ENCODE measurements at regions of chr2 and their contacts with region 1.

Region 1: GRCh38 chr2:151437630-151438029 is 27.9 kb downstream of the RIF1 start:
- DNase-seq: peak; percentile 4
- H3K4me3 ChIP-seq: no peak overlapping the region
- H3K27ac ChIP-seq: no peak overlapping the region
- H3K4me1 ChIP-seq: no peaks in the 10 kb centered on the region
- H3K27me3 ChIP-seq: no peaks in the 10 kb centered on the region
- CTCF ChIP-seq: peak; percentile 32 to 47

Region 2: DNA sequence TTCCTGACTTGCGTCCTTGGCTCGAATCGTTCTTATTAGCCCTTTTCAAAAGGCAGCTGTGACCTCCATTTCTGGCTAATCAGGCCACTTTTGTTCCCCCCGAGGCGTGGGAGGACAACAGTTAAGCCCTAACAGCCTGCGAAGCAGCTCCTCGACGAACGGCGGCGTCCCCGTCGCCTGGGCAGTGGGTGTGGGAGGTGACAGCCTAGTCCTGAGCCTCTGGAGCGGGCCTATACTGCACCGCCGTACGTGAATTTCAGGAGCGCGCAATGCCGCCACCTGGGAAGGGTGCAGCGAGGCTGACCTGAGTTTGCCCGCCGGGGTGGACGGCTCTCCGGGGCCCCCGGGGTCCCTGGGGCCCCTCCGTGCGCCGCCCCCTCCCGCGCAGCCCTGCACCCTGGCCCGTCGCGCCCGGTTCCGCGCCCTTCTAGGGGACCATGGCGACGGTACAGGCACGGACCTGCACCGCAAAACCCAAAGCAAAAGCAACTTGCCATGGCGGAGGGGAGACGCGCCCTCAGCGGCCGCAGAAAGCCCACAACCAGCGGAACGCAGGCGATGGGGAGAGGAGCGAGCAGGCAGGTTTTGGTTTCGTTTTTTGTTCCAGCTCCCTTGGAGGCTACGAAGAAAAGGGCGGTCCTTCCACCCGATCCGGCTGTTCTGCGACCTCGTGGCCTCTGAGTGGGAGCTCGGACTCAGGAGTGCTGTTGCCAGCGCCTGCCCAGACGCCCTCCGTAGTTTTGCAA is 176.2 kb before region 1 on chr2 and contains the start of gene RBM43:
- CTCF ChIA-PET with region 1: no interaction called
- dilution Hi-C with region 1: no loop called
- in situ Hi-C with region 1: no loop called
- intact Hi-C with region 1: loop called (anchors 2 kb)
- DNase-seq: peak; percentile 81
- H3K4me3 ChIP-seq: peak within 1 kb of the TSS; percentile 74 to 82 (median 75)
- H3K27ac ChIP-seq: peak within 1 kb of the TSS; percentile 95
- H3K4me1 ChIP-seq: peaks cover 16% of the 10 kb centered on the region
- H3K27me3 ChIP-seq: no peaks in the 10 kb centered on the region
- CTCF ChIP-seq: no peak
- total RNA-seq, gene RBM43: 2.6 to 4.2 TPM

Measured in mammary epithelial cell (primary cell).